ENCODE measurements at regions of chr14 and their contacts with region 1.

Region 1: GRCh38 chr14:22699801-22700564 is 55.8 kb upstream of the OR6J1 start:
- DNase-seq: no peak

Region 2: GRCh38 chr14:22653012-22653621 is 46.9 kb before region 1 on chr14:
- intact Hi-C with region 1: loop called in 1 of 2 experiments (anchors 1 kb)
- DNase-seq: no peak

Region 3: DNA sequence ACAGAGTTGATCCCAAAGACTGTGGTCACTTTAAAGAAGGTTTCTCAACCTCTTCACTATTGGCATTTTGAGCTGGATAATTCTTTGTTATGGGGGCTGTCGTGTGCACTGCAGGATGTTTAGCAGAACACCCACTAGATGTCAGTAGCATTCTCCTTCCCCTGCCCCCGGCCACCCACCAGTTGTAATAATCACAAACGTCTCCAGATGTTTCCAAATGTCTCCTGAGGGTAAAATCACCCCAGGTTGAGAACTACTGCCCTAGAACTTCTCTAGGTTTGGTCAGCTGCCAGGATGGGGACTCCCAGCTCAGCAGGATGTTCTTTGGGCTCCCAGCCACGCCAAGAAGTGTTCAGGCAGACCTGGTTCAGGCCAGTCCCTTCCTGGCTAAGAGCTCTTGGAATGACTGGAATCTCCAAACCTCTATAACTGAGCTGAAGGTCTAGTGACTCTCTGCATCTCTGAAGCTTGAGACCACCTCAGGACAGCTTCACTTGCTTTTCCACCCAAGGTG is 294.8 kb after region 1 on chr14:
- intact Hi-C with region 1: no loop called
- DNase-seq: no peak

Measured in posterior vena cava (tissue), 2 donors.